Activated B cell treated with CpG ODN at 0.5 μM for 24 hours (primary cell): ENCODE measurements at regions of chr13 and their contacts with region 1.

Region 1: GRCh38 chr13:27171827-27172494 is 350 bp upstream of the USP12 start:
- DNase-seq: peak; percentile 94
- ATAC-seq: peak; percentile 83
- H3K4me3 Mint-ChIP-seq: peak overlapping the region; percentile 91
- H3K27ac Mint-ChIP-seq: peak overlapping the region; percentile 93
- H3K4me1 Mint-ChIP-seq: peaks cover 69% of the 10 kb centered on the region
- H3K27me3 Mint-ChIP-seq: no peaks in the 10 kb centered on the region
- CTCF ChIP-seq: no peak

Region 2: GRCh38 chr13:27112006-27112405 is 60.0 kb before region 1 on chr13:
- CTCF ChIA-PET with region 1: no interaction called
- POLR2A ChIA-PET with region 1: interaction called, 4 read pairs
- intact Hi-C with region 1: loop called (anchors 5 kb)
- DNase-seq: no peak
- ATAC-seq: no peak
- H3K4me3 Mint-ChIP-seq: no peak overlapping the region
- H3K27ac Mint-ChIP-seq: no peak overlapping the region
- H3K4me1 Mint-ChIP-seq: peaks cover 55% of the 10 kb centered on the region
- H3K27me3 Mint-ChIP-seq: no peaks in the 10 kb centered on the region
- CTCF ChIP-seq: no peak

Region 3: DNA sequence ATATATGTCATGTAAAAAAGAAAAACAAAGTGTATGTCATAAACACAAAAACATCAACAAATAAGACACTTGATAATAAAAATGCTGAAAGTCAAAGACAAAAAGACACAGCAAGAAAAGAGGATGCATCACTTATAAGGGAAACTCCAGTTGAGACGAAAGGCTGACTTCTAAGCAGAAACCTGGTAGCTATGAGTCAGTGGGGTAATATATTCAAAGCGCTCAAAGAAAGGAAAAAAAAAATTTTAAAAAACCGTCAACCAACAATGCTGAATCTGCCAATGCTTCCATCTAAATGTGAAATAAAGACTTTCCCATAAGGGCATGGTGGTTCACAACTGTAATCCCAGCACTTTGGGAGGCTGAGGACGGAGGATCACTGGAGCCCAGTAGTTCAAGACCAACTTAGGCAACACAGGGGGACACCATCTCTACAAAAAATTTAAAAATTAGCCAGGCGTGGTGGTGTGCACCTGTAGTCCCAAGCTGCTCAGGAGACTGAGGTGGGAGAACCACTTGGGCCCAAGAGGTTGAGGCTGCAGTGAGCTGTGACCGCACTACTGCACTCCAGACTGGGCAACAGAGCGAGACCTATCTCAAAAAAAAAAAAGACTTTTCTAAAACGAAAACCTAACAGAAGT is 24.3 kb before region 1 on chr13:
- CTCF ChIA-PET with region 1: interaction called, 7 read pairs
- POLR2A ChIA-PET with region 1: interaction called, 39 read pairs
- intact Hi-C with region 1: loop called (anchors 1 kb)
- DNase-seq: peak; percentile 48
- ATAC-seq: peak; percentile 90
- H3K4me3 Mint-ChIP-seq: peak overlapping the region; percentile 81
- H3K27ac Mint-ChIP-seq: peak overlapping the region; percentile 99
- H3K4me1 Mint-ChIP-seq: peaks cover 92% of the 10 kb centered on the region
- H3K27me3 Mint-ChIP-seq: no peaks in the 10 kb centered on the region
- CTCF ChIP-seq: no peak

Region 4: GRCh38 chr13:27226991-27227390 is 55.0 kb after region 1 on chr13:
- CTCF ChIA-PET with region 1: no interaction called
- POLR2A ChIA-PET with region 1: no interaction called
- intact Hi-C with region 1: loop called (anchors 10 kb)
- DNase-seq: no peak
- ATAC-seq: peak; percentile 35
- H3K4me3 Mint-ChIP-seq: peak overlapping the region; percentile 36
- H3K27ac Mint-ChIP-seq: peak overlapping the region; percentile 32
- H3K4me1 Mint-ChIP-seq: peaks cover 67% of the 10 kb centered on the region
- H3K27me3 Mint-ChIP-seq: no peaks in the 10 kb centered on the region
- CTCF ChIP-seq: no peak

Region 5: DNA sequence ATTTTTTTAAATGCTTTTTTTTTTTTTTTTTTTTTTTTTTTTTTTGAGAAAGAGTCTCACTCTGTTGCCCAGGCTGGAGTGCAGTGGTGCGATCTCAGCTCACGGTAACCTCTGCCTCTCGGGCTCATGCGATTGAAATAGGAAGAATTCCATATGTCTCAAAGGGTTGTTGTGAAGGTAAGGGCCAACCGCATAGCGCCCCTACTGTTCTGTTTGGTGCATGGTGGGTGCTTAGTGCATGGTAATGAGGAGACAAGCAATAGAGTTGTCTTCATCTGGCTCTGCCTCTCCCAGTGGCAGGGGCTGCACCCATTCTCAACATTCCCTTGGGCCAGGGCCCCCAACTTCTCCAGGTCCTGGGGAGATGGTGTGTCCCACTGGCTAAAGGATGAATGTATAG is 167.3 kb after region 1 on chr13:
- CTCF ChIA-PET with region 1: no interaction called
- POLR2A ChIA-PET with region 1: no interaction called
- intact Hi-C with region 1: no loop called
- DNase-seq: no peak
- ATAC-seq: peak; percentile 71
- H3K4me3 Mint-ChIP-seq: no peak overlapping the region
- H3K27ac Mint-ChIP-seq: no peak overlapping the region
- H3K4me1 Mint-ChIP-seq: peaks cover 3% of the 10 kb centered on the region
- H3K27me3 Mint-ChIP-seq: peaks cover 4% of the 10 kb centered on the region
- CTCF ChIP-seq: no peak

Region 6: GRCh38 chr13:27353166-27353583 is 181.2 kb after region 1 on chr13:
- CTCF ChIA-PET with region 1: interaction called, 3 read pairs
- POLR2A ChIA-PET with region 1: no interaction called
- intact Hi-C with region 1: loop called (anchors 1 kb)
- DNase-seq: no peak
- ATAC-seq: peak; percentile 96
- H3K4me3 Mint-ChIP-seq: peak overlapping the region; percentile 61
- H3K27ac Mint-ChIP-seq: peak overlapping the region; percentile 79
- H3K4me1 Mint-ChIP-seq: peaks cover 19% of the 10 kb centered on the region
- H3K27me3 Mint-ChIP-seq: no peaks in the 10 kb centered on the region
- CTCF ChIP-seq: no peak

Region 7: GRCh38 chr13:27449936-27450828 is 278.2 kb after region 1 on chr13 and contains the start of gene MTIF3:
- CTCF ChIA-PET with region 1: no interaction called
- POLR2A ChIA-PET with region 1: interaction called, 3 read pairs
- intact Hi-C with region 1: loop called (anchors 1 kb)
- DNase-seq: peak; percentile 89
- ATAC-seq: peak; percentile 81
- H3K4me3 Mint-ChIP-seq: peak within 1 kb of the TSS; percentile 96
- H3K27ac Mint-ChIP-seq: peak within 1 kb of the TSS; percentile 98
- H3K4me1 Mint-ChIP-seq: peaks cover 69% of the 10 kb centered on the region
- H3K27me3 Mint-ChIP-seq: no peaks in the 10 kb centered on the region
- CTCF ChIP-seq: no peak
- total RNA-seq, gene MTIF3: 39.8 and 50.1 TPM in 2 replicates